ENCODE measurements at regions of chr19 and their contacts with region 1.

Region 1: DNA sequence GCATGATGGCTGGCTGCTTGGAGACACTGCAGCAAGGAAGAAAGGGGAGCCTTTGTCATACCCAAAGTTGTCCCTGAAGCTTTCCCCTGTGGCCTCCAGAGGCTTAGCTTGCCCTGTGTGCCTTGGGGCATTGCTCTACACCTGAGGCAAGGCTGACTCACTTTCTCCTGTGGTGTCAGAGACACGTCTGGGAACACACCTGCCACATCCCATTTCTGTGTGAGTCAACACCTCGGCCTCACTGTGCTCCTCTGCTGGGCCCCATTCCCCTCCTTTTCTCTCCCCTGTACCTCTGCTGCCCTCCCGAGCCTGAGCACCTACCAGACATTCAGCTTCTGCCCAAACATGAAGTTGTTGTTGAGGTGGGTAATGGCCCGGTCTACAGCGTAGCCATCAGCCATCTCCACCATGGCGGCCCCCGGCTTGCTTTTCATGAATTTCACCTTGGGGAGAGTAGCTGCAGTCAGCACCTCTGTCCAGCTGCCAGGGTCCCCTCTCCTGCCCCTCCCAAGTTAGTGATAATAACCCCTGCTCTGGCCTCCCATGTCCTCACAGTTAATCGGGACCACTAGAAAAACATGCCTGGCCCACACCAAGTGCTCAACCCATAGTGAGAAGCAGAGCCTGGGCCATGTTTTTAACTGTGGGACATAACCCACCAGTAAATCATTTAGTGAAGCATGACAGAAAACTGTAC is 7.1 kb upstream of the ECH1 start:
- DNase-seq: peak; percentile 98
- H3K4me3 ChIP-seq: no peak overlapping the region
- H3K27ac ChIP-seq: peak overlapping the region; percentile 75
- H3K4me1 ChIP-seq: peaks cover 55% of the 10 kb centered on the region
- H3K27me3 ChIP-seq: no peaks in the 10 kb centered on the region
- CTCF ChIP-seq: peak; percentile 53 to 72

Region 2: DNA sequence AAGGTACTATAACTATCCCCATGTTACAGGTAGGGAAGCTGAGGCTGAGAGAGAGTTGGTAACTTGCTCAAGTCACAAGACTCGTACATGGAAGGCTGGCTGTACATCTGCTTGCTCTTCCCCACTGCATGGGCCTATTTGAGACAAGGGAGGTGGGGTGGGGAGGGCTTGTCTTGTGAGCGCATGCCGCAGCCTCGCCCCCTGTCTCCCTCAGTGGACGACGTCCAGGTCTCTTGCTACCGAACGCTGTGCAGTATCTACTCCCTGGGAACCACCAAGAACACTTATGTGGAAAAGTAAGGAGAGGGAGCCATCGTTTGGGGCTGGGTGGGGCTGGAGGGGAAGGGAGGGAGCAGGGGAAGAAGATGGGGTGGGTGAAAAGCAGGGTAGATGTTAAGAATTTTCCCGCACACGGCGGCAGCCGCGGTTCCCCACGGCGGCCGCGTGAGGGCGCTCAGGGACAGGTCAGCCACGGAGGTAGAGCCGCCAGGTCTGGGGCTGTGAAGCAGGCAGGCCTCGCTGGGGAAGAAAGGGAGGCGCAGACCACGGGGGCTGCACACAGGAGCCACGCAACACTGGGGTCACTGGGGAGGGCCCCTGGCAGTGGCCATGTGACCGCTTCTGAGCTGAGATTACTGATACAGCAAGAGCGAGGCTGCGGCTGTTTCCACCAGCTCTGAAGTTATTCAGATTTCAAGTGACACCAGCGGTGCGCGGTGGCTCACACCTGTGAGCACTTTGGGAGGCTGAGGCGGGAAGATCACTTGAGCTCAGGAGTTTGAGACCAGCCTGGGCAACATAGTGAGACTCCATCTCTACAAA is 323.7 kb before region 1 on chr19:
- CTCF ChIA-PET with region 1: no interaction called
- dilution Hi-C with region 1: no loop called
- in situ Hi-C with region 1: no loop called
- intact Hi-C with region 1: loop called (anchors 2 kb)
- DNase-seq: peak; percentile 45
- H3K4me3 ChIP-seq: peak overlapping the region in 1 of 3 experiments; percentile 4
- H3K27ac ChIP-seq: no peak overlapping the region
- H3K4me1 ChIP-seq: no peaks in the 10 kb centered on the region
- H3K27me3 ChIP-seq: no peaks in the 10 kb centered on the region
- CTCF ChIP-seq: peak; percentile 62 to 90

Region 3: GRCh38 chr19:38693380-38694223 is 145.1 kb before region 1 on chr19:
- CTCF ChIA-PET with region 1: no interaction called
- dilution Hi-C with region 1: loop called (anchors 5 kb)
- in situ Hi-C with region 1: no loop called
- intact Hi-C with region 1: no loop called
- DNase-seq: peak; percentile 98
- H3K4me3 ChIP-seq: peak overlapping the region in 2 of 3 experiments; percentile 5 to 15
- H3K27ac ChIP-seq: peak overlapping the region; percentile 99
- H3K4me1 ChIP-seq: peaks cover 93% of the 10 kb centered on the region
- H3K27me3 ChIP-seq: no peaks in the 10 kb centered on the region
- CTCF ChIP-seq: no peak

Region 4: GRCh38 chr19:38736413-38737280 is 102.1 kb before region 1 on chr19:
- CTCF ChIA-PET with region 1: no interaction called
- dilution Hi-C with region 1: no loop called
- in situ Hi-C with region 1: loop called in 1 of 2 experiments (anchors 25 kb)
- intact Hi-C with region 1: loop called (anchors 1 kb)
- DNase-seq: peak; percentile 36
- H3K4me3 ChIP-seq: peak overlapping the region in 1 of 3 experiments; percentile 41
- H3K27ac ChIP-seq: no peak overlapping the region
- H3K4me1 ChIP-seq: peaks cover 33% of the 10 kb centered on the region
- H3K27me3 ChIP-seq: no peaks in the 10 kb centered on the region
- CTCF ChIP-seq: no peak

Region 5: DNA sequence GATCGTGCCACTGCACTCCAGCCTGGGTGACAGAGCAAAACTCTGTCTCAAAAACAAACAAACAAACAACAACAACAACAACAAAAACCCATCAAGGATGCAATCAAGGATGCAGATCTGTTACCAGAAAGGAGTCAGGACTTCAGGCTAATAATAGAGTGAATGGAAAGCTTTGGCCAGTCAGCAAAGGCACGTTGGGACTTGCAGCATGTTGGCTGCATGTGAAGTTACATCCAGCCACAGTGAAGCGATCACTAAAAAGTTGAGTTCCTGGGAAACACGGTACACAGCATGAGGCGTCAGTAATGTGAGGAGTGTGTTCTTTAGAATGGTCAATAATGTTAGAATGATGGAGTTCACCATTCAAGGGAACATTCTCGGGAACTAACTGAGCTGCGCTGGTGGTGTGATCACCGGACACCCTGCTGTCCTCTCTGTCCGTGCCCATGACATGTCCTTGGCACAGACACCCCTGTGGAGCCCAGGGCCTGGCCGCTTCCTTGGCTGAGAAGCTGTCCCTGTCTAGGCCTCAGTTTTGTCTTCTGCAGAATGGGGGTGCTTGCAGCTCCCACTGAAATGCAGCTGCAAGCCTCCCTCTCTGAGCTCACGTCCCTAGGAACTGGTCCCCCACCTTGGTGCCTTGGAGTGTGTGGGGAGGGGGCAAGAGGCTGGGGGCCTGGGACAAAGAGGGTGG is 52.0 kb before region 1 on chr19:
- CTCF ChIA-PET with region 1: no interaction called
- dilution Hi-C with region 1: no loop called
- in situ Hi-C with region 1: loop called in 1 of 2 experiments (anchors 5 kb)
- intact Hi-C with region 1: loop called (anchors 5 kb)
- DNase-seq: peak; percentile 76
- H3K4me3 ChIP-seq: no peak overlapping the region
- H3K27ac ChIP-seq: peak overlapping the region; percentile 18
- H3K4me1 ChIP-seq: peaks cover 21% of the 10 kb centered on the region
- H3K27me3 ChIP-seq: no peaks in the 10 kb centered on the region
- CTCF ChIP-seq: no peak

Region 6: GRCh38 chr19:38815059-38816001 is 23.4 kb before region 1 on chr19:
- CTCF ChIA-PET with region 1: no interaction called
- dilution Hi-C with region 1: no loop called
- in situ Hi-C with region 1: no loop called
- intact Hi-C with region 1: no loop called
- DNase-seq: no peak
- H3K4me3 ChIP-seq: no peak overlapping the region
- H3K27ac ChIP-seq: no peak overlapping the region
- H3K4me1 ChIP-seq: no peaks in the 10 kb centered on the region
- H3K27me3 ChIP-seq: no peaks in the 10 kb centered on the region
- CTCF ChIP-seq: no peak

Region 7: GRCh38 chr19:38912600-38913514 is 74.1 kb after region 1 on chr19:
- CTCF ChIA-PET with region 1: no interaction called
- dilution Hi-C with region 1: no loop called
- in situ Hi-C with region 1: no loop called
- intact Hi-C with region 1: no loop called
- DNase-seq: no peak
- H3K4me3 ChIP-seq: no peak overlapping the region
- H3K27ac ChIP-seq: no peak overlapping the region
- H3K4me1 ChIP-seq: no peaks in the 10 kb centered on the region
- H3K27me3 ChIP-seq: no peaks in the 10 kb centered on the region
- CTCF ChIP-seq: no peak

Region 8: DNA sequence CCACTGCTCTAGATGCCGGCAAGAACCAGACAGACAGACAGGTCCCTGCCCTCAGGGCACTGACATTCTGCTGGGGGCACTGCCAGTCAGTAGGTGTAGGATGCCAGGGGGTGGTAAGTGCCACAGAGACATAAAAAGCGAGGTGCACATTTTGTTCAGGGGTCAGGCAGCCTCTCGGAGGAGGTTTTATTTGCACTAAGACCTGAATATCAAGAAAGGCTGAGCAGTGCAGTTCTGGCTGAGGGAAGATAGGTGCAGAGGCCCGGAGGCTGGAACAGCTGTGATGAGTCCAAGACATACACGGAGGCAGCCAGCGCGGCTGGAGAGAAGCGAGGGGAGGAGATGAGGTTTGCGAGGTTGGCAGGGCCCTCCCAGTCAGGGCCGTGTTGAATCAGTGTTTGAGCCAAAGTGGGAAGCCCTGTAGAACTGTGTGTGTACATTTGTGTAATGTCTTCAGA is 321.6 kb after region 1 on chr19:
- CTCF ChIA-PET with region 1: no interaction called
- dilution Hi-C with region 1: no loop called
- in situ Hi-C with region 1: no loop called
- intact Hi-C with region 1: no loop called
- DNase-seq: peak; percentile 62
- H3K4me3 ChIP-seq: no peak overlapping the region
- H3K27ac ChIP-seq: peak overlapping the region; percentile 61
- H3K4me1 ChIP-seq: peaks cover 48% of the 10 kb centered on the region
- H3K27me3 ChIP-seq: no peaks in the 10 kb centered on the region
- CTCF ChIP-seq: peak in 1 of 2 donors; percentile 10